Heart left ventricle (tissue), 16 donors: ENCODE measurements at regions of chr10 and their contacts with region 1.

Region 1: DNA sequence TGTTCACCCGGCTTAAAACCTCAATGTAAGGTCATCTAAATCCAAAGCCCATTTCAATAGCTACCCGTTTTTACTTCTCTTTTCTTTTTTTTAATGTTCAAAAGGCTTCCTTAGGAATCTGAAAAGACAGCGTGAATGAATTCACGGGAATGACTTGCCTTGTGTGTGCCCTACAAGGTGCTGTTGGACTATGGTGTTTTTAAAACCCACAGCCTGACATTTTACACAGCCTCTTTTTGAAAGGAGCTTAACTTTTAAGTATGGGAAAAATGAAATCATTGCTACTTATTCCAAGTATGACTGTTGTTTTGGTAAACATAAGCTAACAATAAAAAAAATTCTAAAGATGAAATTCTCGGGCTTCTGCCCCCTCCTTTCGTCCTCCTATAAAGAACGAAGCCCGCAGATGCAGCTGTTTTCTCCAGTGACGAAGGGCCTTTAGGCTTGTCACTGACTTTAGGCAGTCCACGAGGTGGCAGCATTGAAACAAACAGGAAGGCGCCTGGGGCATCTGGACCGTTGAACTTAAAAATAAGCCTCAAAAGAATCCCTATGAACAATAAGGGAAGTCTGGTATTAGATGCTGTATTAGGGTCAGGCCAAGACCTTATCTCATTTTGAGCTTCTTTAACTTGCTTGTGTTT is 141.3 kb downstream of the NRP1 start:
- DNase-seq: peak; percentile 83 to 90 (median 85)
- ATAC-seq: peak; percentile 73 to 86 (median 82)
- H3K4me3 ChIP-seq: no peak overlapping the region
- H3K27ac ChIP-seq: peak overlapping the region; percentile 25 to 75 (median 52)
- H3K4me1 ChIP-seq: peaks cover 4 to 57% (median 41%) of the 10 kb centered on the region in 12 donors
- H3K27me3 ChIP-seq: no peaks in the 10 kb centered on the region
- CTCF ChIP-seq: peak; percentile 66 to 95 (median 83)
- POLR2A ChIP-seq: no peak

Region 2: DNA sequence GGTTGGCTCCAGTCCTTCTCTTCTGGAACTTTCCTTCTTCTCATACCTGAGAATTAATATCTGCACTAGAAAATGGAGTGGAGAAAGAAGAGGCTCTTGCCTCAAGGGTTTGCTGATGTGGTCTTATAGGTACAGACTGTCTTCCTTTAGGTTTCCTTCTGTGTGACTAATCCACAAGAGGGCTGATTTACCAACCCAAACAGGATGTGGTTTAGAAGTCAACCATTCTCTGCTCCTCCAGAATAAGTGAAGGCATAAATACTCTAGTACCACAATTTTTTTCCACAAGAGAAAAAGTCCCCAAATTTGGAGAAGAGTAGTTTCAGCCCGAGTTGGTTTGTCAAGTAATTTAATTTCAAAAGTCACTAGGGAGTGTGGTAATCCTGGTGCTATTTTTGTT is 55.5 kb after region 1 on chr10:
- intact Hi-C with region 1: loop called in 2 of 10 experiments (anchors 5 to 10 kb)
- DNase-seq: no peak
- ATAC-seq: peak in 1 of 4 donors; percentile 36
- H3K4me3 ChIP-seq: no peak overlapping the region
- H3K27ac ChIP-seq: peak overlapping the region; percentile 56 to 87 (median 73)
- H3K4me1 ChIP-seq: peaks cover 2 to 90% (median 55%) of the 10 kb centered on the region in 12 donors
- H3K27me3 ChIP-seq: no peaks in the 10 kb centered on the region
- CTCF ChIP-seq: no peak
- POLR2A ChIP-seq: no peak

Region 3: DNA sequence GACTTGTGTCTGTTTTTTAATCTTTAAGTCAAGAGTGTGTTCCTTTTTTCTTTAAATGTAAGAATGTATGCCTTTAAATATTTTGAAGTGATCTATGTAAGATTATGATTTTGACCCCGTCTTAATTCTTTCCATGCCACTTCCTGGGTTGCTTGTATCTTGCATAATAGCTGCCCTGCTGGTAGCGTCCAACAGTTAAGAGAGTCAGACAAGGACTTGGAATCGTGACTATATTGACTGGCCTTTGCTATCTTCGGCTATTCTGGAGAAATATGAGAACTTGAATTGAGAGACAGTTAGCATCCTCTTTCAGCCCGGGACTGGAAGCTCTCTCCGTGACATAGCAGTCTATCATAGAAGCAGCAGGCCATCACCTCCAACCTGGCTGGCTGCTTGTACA is 128.3 kb after region 1 on chr10:
- intact Hi-C with region 1: loop called in 1 of 10 experiments (anchors 5 kb)
- DNase-seq: no peak
- ATAC-seq: peak in 1 of 4 donors; percentile 14
- H3K4me3 ChIP-seq: no peak overlapping the region
- H3K27ac ChIP-seq: peak overlapping the region in 7 of 12 donors; percentile 15 to 49 (median 27)
- H3K4me1 ChIP-seq: peaks cover 17 to 98% (median 88%) of the 10 kb centered on the region in 12 donors
- H3K27me3 ChIP-seq: no peaks in the 10 kb centered on the region
- CTCF ChIP-seq: no peak
- POLR2A ChIP-seq: no peak

Region 4: GRCh38 chr10:33975481-33975880 is 782.3 kb after region 1 on chr10:
- intact Hi-C with region 1: loop called in 1 of 10 experiments (anchors 10 kb)
- DNase-seq: no peak
- ATAC-seq: no peak
- H3K4me3 ChIP-seq: no peak overlapping the region
- H3K27ac ChIP-seq: no peak overlapping the region
- H3K4me1 ChIP-seq: peaks cover 0 to 2% (median 0%) of the 10 kb centered on the region in 12 donors
- H3K27me3 ChIP-seq: no peaks in the 10 kb centered on the region
- CTCF ChIP-seq: no peak
- POLR2A ChIP-seq: no peak